PC-9 (cell line): ENCODE measurements at regions of chr7 and their contacts with region 1.

Region 1: DNA sequence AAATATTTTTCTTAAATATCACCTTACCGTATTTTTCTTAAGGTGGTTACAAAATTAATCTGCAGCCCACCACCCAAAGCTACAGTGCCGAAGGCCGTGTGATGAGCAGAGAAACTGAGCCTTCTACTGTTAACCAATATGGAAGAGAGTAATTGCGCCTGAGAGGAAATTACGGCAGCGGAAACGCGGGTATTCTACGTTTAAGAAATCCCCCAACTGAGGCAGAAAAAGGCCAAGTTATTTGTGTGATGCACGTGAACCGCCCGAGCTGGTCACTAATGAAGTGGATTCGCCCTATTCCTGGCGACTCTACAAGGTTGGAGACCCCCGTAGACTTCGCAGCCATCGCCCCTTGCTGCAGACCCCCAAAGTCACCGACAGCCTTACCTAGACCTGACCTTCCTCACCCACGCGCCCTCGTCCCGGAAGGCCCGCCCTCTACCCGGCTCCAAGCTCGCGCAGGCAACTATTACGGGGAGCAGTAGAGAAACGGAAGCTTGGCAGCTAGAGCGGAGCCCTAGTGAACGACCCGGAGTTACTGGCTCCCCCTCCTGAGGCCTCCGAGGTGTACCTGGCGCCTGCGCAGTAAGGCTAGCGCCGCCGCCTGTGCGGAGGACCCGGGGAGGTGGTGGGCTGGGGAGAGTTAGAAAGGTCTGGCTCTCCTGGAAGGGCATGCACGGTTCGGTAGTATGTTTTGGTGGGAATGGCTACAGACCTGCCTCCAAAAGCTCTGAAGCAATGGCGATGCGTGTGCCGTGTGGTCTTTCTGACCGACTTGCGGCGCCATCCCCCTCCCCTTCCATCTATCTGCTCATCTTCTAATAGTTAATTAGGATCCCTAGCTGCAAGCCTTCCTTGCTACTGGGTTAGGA is at the start of gene MRPS33:
- DNase-seq: peak; percentile 93 to 94
- H3K4me3 ChIP-seq: peak within 1 kb of the TSS; percentile 91
- H3K27ac ChIP-seq: peak within 1 kb of the TSS; percentile 42
- H3K4me1 ChIP-seq: peaks cover 16% of the 10 kb centered on the region
- H3K27me3 ChIP-seq: peaks cover 23% of the 10 kb centered on the region; the same call in 1 of the 2 replicates
- CTCF ChIP-seq: peak; percentile 43; the same call in 1 of the 2 replicates
- total RNA-seq, gene MRPS33: 70.8 and 84.4 TPM in 2 replicates

Region 2: GRCh38 chr7:140403878-140404564 is 610.7 kb before region 1 on chr7 and contains the start of gene RAB19:
- CTCF ChIA-PET with region 1: no interaction called
- POLR2A ChIA-PET with region 1: no interaction called
- intact Hi-C with region 1: loop called (anchors 10 kb)
- DNase-seq: peak; percentile 67 to 74
- H3K4me3 ChIP-seq: peak within 1 kb of the TSS; percentile 70
- H3K27ac ChIP-seq: no peak within 1 kb of the TSS
- H3K4me1 ChIP-seq: peaks cover 26% of the 10 kb centered on the region
- H3K27me3 ChIP-seq: no peaks in the 10 kb centered on the region
- CTCF ChIP-seq: no peak
- total RNA-seq, gene RAB19: 7.8 and 9.1 TPM in 2 replicates

Region 3: DNA sequence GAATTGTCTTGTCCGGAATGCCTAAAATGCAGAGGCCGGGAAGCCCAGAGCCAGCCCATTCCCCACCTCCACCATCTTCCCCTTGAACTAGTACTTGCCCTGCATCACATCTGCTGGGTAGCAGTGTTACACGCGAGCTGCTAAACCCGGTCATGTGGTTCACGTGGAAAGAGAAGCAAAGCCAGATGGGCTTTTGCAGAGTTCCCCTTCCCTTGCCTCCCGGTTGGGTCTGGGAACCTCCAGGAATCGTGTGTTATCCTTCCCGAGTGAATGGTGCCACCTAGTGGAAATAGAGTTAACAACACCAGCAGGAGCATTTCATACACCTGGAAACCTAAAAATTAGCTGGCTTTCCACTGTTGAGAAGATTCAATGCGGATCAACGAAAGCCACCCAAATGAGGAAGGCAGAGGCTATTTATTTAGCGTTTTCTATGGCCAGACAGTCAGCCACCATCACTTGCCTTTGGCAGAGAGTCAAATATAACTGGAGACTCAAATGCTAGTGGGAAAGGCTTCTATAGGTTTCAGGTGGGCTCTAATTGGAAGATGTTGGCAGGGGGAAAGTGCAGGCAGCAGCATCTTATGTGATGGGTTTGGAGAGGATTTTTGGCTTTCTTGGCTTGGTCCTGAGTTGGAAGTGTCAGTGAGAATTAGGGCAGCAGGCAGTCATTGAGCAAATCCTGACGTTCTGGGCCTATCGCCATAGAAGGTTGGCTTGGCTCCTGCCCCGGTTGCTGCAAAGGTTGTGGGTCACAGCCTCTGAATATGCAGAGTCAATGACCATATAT is 361.2 kb before region 1 on chr7:
- CTCF ChIA-PET with region 1: interaction called, 4 read pairs
- POLR2A ChIA-PET with region 1: no interaction called
- intact Hi-C with region 1: loop called (anchors 5 kb)
- DNase-seq: peak; percentile 63 to 64
- H3K4me3 ChIP-seq: no peak overlapping the region
- H3K27ac ChIP-seq: no peak overlapping the region
- H3K4me1 ChIP-seq: peaks cover 55% of the 10 kb centered on the region
- H3K27me3 ChIP-seq: no peaks in the 10 kb centered on the region
- CTCF ChIP-seq: peak; percentile 95

Region 4: GRCh38 chr7:140732436-140732835 is 282.3 kb before region 1 on chr7:
- CTCF ChIA-PET with region 1: no interaction called
- POLR2A ChIA-PET with region 1: no interaction called
- intact Hi-C with region 1: loop called (anchors 5 kb)
- DNase-seq: no peak
- H3K4me3 ChIP-seq: no peak overlapping the region
- H3K27ac ChIP-seq: no peak overlapping the region
- H3K4me1 ChIP-seq: no peaks in the 10 kb centered on the region
- H3K27me3 ChIP-seq: no peaks in the 10 kb centered on the region
- CTCF ChIP-seq: no peak

Region 5: DNA sequence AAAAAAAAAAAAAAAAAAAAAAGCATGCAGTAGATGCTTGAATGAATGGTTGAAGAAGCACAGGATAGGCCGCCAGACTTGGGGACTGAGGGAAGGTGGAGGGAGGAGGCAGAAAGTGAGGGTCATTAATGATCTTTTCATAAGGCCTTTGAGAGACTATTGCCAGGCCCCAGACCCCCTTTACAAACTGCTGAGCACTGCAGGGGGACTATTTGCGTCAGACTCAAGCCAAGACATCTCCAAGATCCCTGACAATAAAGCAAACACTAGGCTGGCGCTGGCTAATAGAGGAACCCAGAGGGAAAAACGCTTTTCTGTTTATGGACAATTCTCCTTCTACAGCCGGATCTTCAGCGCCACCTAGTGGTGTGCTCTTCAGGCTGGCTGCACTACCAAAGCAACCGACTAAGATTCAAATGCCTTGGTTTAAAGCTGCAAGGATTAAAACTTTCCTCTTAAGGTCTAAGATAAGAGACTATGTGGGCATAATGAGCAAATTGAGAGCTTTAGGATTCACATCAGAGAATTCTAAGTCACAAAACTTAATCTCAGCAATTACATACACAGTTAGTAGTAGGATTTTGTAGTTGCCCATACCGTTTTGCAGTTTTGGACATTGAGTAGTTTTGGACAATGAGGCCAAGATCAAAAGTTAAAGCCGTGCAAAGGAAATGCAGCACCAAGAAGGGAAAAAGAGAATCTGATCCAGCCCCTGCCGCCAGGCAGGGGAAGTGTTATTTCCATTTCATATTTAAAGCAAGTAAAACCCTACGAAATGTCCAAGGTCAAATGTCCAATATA is 518.6 kb after region 1 on chr7:
- CTCF ChIA-PET with region 1: interaction called, 6 read pairs
- POLR2A ChIA-PET with region 1: no interaction called
- intact Hi-C with region 1: loop called (anchors 2 kb)
- DNase-seq: peak; percentile 41 to 53
- H3K4me3 ChIP-seq: no peak overlapping the region
- H3K27ac ChIP-seq: no peak overlapping the region
- H3K4me1 ChIP-seq: no peaks in the 10 kb centered on the region
- H3K27me3 ChIP-seq: peaks cover 40% of the 10 kb centered on the region
- CTCF ChIP-seq: peak; percentile 96

Region 6: DNA sequence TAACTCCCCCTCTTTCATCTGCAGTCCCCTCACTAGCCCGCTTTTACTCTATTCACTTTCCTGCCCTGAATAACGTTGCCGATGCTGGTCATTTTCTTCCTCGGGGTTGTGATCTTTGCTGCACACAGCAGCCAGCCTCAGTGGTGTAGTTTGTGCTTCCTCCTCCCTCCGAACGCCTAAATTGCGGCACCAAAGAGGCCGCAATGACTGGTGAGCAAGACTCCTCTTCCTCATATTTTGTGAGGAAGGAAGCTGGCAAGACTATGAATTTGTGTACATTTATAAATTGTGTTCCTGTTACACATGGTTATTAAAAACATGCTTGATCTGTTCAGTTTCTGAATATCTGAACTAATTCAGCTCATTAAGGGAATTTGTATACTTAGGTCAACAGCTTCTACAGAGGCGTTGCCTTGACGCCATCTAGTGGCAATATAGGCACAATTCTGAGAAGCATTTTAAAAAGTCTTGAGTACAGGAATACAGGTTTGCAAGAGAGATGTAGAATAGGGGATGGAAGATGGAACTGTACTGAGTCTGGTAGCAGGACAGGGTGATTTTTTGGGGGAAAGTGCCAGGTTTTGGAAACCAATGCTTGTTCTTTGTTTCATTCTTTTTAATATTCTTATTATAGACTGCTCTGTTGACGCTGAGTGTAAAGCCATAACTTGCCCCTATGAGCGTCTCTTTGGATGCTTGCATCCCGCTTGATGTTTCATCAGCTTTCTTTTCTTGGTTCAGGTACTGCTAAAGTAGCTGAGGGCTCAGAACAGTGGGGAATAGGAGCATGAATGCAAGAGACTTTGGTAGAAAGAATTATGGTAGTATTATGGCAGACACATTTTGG is 771.2 kb after region 1 on chr7:
- CTCF ChIA-PET with region 1: no interaction called
- POLR2A ChIA-PET with region 1: no interaction called
- intact Hi-C with region 1: loop called (anchors 5 kb)
- DNase-seq: peak; percentile 18 to 60
- H3K4me3 ChIP-seq: no peak overlapping the region
- H3K27ac ChIP-seq: no peak overlapping the region
- H3K4me1 ChIP-seq: no peaks in the 10 kb centered on the region
- H3K27me3 ChIP-seq: no peaks in the 10 kb centered on the region
- CTCF ChIP-seq: peak; percentile 85